A549 (cell line): ENCODE measurements at regions of chr12 and their contacts with region 1.

Region 1: DNA sequence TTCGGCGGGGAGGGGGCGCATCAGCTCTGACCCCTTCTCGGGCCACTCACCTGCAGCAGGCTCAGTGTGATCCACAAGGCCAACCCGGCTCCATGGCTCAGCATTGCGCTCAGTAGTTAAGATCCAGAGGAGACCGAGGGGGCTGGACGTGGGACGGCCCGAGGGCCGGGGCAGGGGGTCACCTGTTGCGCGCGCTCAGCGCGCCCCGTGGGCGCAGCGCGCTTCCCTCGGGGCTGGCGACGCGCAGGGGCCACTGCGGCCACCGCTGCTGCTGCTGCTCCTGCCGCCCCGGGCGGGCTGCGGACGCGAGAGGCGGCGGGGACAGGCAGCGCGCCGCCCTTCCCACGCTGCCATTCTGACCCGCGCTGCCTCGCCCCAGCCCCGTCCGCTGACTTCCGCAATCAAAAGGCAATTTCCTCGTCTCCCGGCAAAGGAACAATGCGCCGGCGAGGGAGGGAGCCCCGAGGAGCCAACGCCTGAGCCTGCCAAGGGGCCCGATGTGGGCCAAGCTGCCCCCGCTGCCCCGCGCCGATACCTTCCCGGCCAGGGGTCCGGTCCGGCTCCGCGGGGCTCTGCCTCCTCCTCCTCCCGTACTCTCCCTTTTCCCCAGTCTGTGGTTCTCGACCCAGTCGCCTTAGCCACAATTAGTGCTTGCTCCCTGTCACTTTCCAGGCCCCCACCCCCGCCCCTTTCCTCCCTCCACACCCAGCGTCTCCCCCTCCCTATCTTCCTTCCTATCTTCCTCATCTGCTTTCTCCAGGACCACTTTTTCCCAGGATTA is 27.3 kb downstream of the PTPRB start:
- DNase-seq: peak; percentile 21 to 22
- ATAC-seq: peak; percentile 78 to 87
- H3K4me3 ChIP-seq: peak overlapping the region; percentile 58
- H3K27ac ChIP-seq: peak overlapping the region; percentile 62 to 82
- H3K4me1 ChIP-seq: no peaks in the 10 kb centered on the region
- CTCF ChIP-seq: no peak
- EP300 ChIP-seq: no peak
- POLR2A ChIP-seq: no peak
- RAD21 ChIP-seq: no peak

Region 2: DNA sequence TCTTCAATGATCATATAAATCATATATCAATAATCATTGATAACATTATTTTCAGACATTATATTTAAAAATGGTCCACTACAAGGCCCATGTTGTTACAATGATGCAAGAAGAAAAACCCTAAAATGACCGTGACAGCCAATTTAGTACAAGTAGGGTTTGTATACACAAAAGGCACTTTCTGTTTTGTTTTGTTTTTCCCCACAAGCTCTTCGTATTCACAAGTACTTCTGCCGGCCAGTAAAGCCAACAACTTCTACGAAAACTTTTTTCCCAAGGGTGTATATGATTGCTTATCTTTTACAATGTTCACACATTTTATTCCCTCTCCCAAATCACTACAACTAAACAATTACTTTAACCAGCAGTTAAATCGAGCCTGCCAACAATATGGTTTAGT is 17.8 kb after region 1 on chr12:
- CTCF ChIA-PET with region 1: no interaction called
- POLR2A ChIA-PET with region 1: interaction called, 11 read pairs
- DNase-seq: no peak
- ATAC-seq: no peak
- H3K4me3 ChIP-seq: no peak overlapping the region
- H3K27ac ChIP-seq: no peak overlapping the region
- H3K4me1 ChIP-seq: no peaks in the 10 kb centered on the region
- CTCF ChIP-seq: no peak
- EP300 ChIP-seq: no peak
- POLR2A ChIP-seq: no peak
- RAD21 ChIP-seq: no peak